Calu3 (cell line): ENCODE measurements at regions of chr18 and their contacts with region 1.

Region 1: DNA sequence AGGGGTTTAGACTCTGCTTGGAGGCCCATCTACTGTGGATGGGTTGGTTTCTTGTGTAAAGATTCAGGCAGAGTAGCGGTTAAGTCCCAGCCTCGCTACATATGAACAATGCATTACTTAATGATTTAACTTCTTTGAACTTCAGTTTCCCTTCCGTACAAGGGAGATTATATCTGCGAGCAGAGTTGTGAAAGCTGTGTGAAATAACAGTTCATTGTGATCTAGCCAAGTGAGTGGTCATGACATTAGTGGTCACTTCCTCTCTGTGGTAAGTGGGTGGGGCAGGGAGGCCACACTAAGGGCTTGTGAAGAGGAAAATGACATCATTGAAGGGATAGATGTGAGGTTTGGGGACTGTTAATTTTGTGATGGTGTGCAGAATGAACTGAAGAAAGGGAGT is 14.1 kb upstream of the MEX3C start:
- DNase-seq: peak; percentile 85
- H3K4me3 Mint-ChIP-seq: peak overlapping the region; percentile 11
- H3K27ac Mint-ChIP-seq: peak overlapping the region; percentile 88
- H3K4me1 Mint-ChIP-seq: peaks cover 27% of the 10 kb centered on the region
- H3K27me3 Mint-ChIP-seq: no peaks in the 10 kb centered on the region
- CTCF ChIP-seq: no peak

Region 2: DNA sequence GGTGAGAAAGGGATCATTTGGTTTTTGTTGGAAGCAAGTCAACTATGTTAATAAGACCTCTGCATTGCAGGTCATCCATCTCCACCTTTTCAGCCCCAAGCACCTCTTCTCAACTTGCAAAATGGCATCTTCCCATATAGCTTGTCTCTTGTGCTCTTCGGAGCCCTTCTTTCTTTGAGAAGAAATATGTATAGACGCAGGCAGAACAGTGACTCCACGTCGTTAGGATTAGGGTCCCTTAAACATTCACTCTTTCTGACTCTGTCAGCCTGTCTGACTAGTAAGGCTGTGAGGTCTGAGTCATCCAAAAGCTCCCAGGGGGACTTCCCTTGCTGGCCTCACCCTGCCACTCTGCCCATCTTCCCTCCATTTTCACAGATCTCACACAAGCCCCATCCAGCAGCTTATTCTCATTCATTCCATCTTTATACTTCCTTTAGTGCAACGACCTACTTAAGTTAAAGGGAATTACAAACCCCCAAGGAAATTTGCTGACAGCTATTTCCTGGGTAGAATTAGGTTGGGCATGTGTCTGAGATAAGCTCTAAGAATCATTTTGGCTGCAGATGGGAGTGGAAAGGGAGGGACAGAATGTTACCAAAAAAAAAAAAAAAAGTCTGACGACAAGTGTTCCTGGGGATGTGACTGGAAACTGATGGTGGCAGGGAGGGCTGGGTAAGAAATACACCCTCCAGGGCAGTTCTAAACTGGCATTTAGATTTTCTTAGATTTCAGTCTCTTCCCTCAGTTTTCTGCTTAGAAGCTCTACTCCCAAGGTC is 23.6 kb after region 1 on chr18:
- CTCF ChIA-PET with region 1: no interaction called
- intact Hi-C with region 1: loop called (anchors 1 kb)
- DNase-seq: peak; percentile 63
- H3K4me3 Mint-ChIP-seq: peak overlapping the region; percentile 49
- H3K27ac Mint-ChIP-seq: peak overlapping the region; percentile 94
- H3K4me1 Mint-ChIP-seq: peaks cover 45% of the 10 kb centered on the region
- H3K27me3 Mint-ChIP-seq: no peaks in the 10 kb centered on the region
- CTCF ChIP-seq: no peak